ENCODE measurements at regions of chr11 and their contacts with region 1.

Region 1: GRCh38 chr11:123103326-123103980 is 41.5 kb upstream of the HSPA8 start:
- DNase-seq: peak; percentile 71

Region 2: GRCh38 chr11:123261345-123262106 is 158.1 kb after region 1 on chr11:
- in situ Hi-C with region 1: loop called (anchors 25 kb)
- DNase-seq: peak; percentile 80